GM12878 (cell line): ENCODE measurements at regions of chrX and their contacts with region 1.

Region 1: GRCh38 chrX:120560842-120561633 is at the start of gene CUL4B:
- DNase-seq: peak; percentile 72
- ATAC-seq: peak; percentile 90
- H3K4me3 ChIP-seq: peak within 1 kb of the TSS; percentile 74
- H3K27ac ChIP-seq: peak within 1 kb of the TSS; percentile 85
- H3K4me1 ChIP-seq: no peaks in the 10 kb centered on the region
- H3K27me3 ChIP-seq: no peaks in the 10 kb centered on the region
- CTCF ChIP-seq: no peak
- EP300 ChIP-seq: peak in 1 of 2 experiments; percentile 8; a peak in 1 of 4 replicates
- POLR2A ChIP-seq: peak; percentile 84
- RAD21 ChIP-seq: no peak
- polyA plus RNA-seq, gene CUL4B: 11.0 to 12.1 TPM

Region 2: GRCh38 chrX:120603707-120604360 is 42.8 kb after region 1 on chrX and contains the start of gene MCTS1:
- CTCF ChIA-PET with region 1: no interaction called
- POLR2A ChIA-PET with region 1: interaction called, 20 read pairs
- RAD21 ChIA-PET with region 1: interaction called, 17 read pairs
- SMC1A ChIA-PET with region 1: interaction called, 21 read pairs
- in situ Hi-C with region 1: no loop called
- intact Hi-C with region 1: loop called (anchors 1 kb)
- DNase-seq: peak; percentile 78
- ATAC-seq: peak; percentile 95
- H3K4me3 ChIP-seq: peak within 1 kb of the TSS; percentile 74
- H3K27ac ChIP-seq: peak within 1 kb of the TSS; percentile 77
- H3K4me1 ChIP-seq: no peaks in the 10 kb centered on the region
- H3K27me3 ChIP-seq: no peaks in the 10 kb centered on the region
- CTCF ChIP-seq: no peak
- EP300 ChIP-seq: no peak
- POLR2A ChIP-seq: peak; percentile 65
- RAD21 ChIP-seq: no peak
- polyA plus RNA-seq, gene MCTS1: 214 to 238 TPM

Region 3: DNA sequence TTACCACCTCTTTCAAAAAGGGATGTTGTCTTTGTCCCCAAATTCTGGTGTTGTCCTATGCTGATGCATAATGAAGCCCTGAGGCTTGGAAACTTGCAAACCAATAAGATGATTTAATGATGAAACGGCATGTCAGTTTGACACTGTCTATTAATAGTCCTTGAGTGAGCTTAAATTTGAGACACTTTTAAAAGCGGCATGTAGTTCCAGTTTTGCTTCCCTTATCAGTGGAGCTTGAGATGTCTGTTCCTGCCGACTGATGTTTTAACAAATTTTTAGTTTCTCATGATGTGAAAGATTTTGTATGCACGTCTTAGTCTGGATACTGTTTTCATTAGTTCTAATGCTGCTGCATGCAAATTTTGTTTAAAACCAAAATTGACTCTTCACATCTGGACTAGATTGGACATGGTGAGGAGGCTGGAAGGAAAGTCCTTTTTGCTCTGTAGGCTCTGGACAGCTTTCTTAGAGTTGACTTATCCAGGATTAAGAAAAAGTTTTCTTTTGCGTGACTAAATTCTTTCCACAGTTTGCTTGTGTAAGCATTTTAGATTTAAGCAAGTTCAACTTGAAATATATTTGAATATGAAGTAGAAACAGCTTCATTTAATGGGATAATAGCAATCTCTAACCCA is 57.1 kb after region 1 on chrX:
- CTCF ChIA-PET with region 1: interaction called, 4 read pairs
- POLR2A ChIA-PET with region 1: interaction called, 4 read pairs
- RAD21 ChIA-PET with region 1: interaction called, 12 read pairs
- SMC1A ChIA-PET with region 1: no interaction called
- in situ Hi-C with region 1: no loop called
- intact Hi-C with region 1: no loop called
- DNase-seq: no peak
- ATAC-seq: peak; percentile 71
- H3K4me3 ChIP-seq: no peak overlapping the region
- H3K27ac ChIP-seq: peak overlapping the region; percentile 6; the same call in 1 of the 2 replicates
- H3K4me1 ChIP-seq: peaks cover 4% of the 10 kb centered on the region
- H3K27me3 ChIP-seq: no peaks in the 10 kb centered on the region
- CTCF ChIP-seq: no peak
- EP300 ChIP-seq: no peak
- POLR2A ChIP-seq: no peak
- RAD21 ChIP-seq: no peak

Region 4: GRCh38 chrX:120629667-120630537 is 68.9 kb after region 1 on chrX and contains the start of gene C1GALT1C1:
- CTCF ChIA-PET with region 1: no interaction called
- POLR2A ChIA-PET with region 1: interaction called, 11 read pairs
- RAD21 ChIA-PET with region 1: interaction called, 5 read pairs
- SMC1A ChIA-PET with region 1: interaction called, 5 read pairs
- in situ Hi-C with region 1: no loop called
- intact Hi-C with region 1: loop called (anchors 1 kb)
- DNase-seq: peak; percentile 77
- ATAC-seq: peak; percentile 97
- H3K4me3 ChIP-seq: peak within 1 kb of the TSS; percentile 74
- H3K27ac ChIP-seq: peak within 1 kb of the TSS; percentile 85
- H3K4me1 ChIP-seq: no peaks in the 10 kb centered on the region; the same call in 1 of the 2 replicates
- H3K27me3 ChIP-seq: no peaks in the 10 kb centered on the region
- CTCF ChIP-seq: no peak
- EP300 ChIP-seq: no peak
- POLR2A ChIP-seq: peak; percentile 86
- RAD21 ChIP-seq: no peak
- polyA plus RNA-seq, gene C1GALT1C1: 51.7 to 71.7 TPM

Region 5: GRCh38 chrX:120749141-120749846 is 188.3 kb after region 1 on chrX:
- CTCF ChIA-PET with region 1: no interaction called
- POLR2A ChIA-PET with region 1: interaction called, 5 read pairs
- RAD21 ChIA-PET with region 1: interaction called, 7 read pairs
- SMC1A ChIA-PET with region 1: interaction called, 10 read pairs
- in situ Hi-C with region 1: no loop called
- intact Hi-C with region 1: no loop called
- DNase-seq: no peak
- ATAC-seq: peak; percentile 73
- H3K4me3 ChIP-seq: no peak overlapping the region
- H3K27ac ChIP-seq: no peak overlapping the region; the same call in 1 of the 2 replicates
- H3K4me1 ChIP-seq: peaks cover 16% of the 10 kb centered on the region
- H3K27me3 ChIP-seq: no peaks in the 10 kb centered on the region
- CTCF ChIP-seq: no peak
- EP300 ChIP-seq: no peak
- POLR2A ChIP-seq: no peak
- RAD21 ChIP-seq: no peak